ENCODE measurements at regions of chr3 and their contacts with region 1.

Region 1: GRCh38 chr3:16884084-16884747 is 539 bp upstream of the PLCL2 start:
- DNase-seq: peak; percentile 69 to 92
- ATAC-seq: peak; percentile 80 to 94
- H3K4me3 ChIP-seq: peak overlapping the region; percentile 85
- H3K27ac ChIP-seq: peak overlapping the region; percentile 77 to 88
- H3K4me1 ChIP-seq: peaks cover 8% of the 10 kb centered on the region; the same call in 2 of the 3 replicates
- CTCF ChIP-seq: peak; percentile 74
- EP300 ChIP-seq: no peak
- POLR2A ChIP-seq: no peak
- RAD21 ChIP-seq: peak; percentile 54 to 69

Region 2: GRCh38 chr3:16816048-16816780 is 68.0 kb before region 1 on chr3:
- CTCF ChIA-PET with region 1: no interaction called
- POLR2A ChIA-PET with region 1: no interaction called
- DNase-seq: no peak
- ATAC-seq: no peak
- H3K4me3 ChIP-seq: no peak overlapping the region
- H3K27ac ChIP-seq: no peak overlapping the region
- H3K4me1 ChIP-seq: no peaks in the 10 kb centered on the region
- CTCF ChIP-seq: no peak
- EP300 ChIP-seq: no peak
- POLR2A ChIP-seq: no peak
- RAD21 ChIP-seq: no peak

Region 3: DNA sequence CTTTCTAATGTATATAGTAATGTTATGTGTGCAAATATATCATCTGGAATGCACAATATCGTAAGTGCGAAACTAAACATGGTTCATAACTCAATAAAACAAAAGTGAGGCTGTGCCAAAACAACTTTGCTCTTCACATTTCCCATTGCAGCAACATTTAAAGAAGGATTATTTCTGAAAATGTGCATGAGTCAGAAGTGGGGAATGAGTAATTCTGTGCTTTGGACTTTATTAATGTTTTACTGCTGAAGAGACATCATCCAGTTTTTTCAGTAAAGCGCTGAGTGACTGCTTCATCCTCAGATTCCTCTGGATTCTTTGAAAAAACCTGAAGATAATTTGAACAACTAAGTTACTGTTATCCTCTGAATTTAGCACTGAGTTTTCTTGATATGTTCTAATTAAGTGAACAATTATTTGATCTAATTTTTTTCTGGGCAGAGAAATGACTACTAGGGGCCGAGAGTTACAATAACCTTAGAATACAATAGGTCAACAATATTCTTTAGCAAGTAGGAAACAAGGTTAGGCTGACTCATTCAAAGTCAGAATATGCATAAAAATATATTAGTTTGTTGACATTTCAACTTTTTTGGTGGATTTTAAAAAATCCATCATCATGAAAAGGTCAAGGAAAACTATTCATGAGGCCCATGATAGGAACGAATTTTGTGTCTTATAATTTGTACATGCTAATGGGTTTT is 19.5 kb before region 1 on chr3:
- CTCF ChIA-PET with region 1: interaction called, 15 read pairs
- POLR2A ChIA-PET with region 1: no interaction called
- DNase-seq: peak; percentile 36 to 39
- ATAC-seq: peak; percentile 84 to 91
- H3K4me3 ChIP-seq: no peak overlapping the region
- H3K27ac ChIP-seq: peak overlapping the region; percentile 19 to 52; a peak in 3 of 6 replicates
- H3K4me1 ChIP-seq: peaks cover 30% of the 10 kb centered on the region
- CTCF ChIP-seq: no peak
- EP300 ChIP-seq: no peak
- POLR2A ChIP-seq: no peak
- RAD21 ChIP-seq: no peak

Region 4: DNA sequence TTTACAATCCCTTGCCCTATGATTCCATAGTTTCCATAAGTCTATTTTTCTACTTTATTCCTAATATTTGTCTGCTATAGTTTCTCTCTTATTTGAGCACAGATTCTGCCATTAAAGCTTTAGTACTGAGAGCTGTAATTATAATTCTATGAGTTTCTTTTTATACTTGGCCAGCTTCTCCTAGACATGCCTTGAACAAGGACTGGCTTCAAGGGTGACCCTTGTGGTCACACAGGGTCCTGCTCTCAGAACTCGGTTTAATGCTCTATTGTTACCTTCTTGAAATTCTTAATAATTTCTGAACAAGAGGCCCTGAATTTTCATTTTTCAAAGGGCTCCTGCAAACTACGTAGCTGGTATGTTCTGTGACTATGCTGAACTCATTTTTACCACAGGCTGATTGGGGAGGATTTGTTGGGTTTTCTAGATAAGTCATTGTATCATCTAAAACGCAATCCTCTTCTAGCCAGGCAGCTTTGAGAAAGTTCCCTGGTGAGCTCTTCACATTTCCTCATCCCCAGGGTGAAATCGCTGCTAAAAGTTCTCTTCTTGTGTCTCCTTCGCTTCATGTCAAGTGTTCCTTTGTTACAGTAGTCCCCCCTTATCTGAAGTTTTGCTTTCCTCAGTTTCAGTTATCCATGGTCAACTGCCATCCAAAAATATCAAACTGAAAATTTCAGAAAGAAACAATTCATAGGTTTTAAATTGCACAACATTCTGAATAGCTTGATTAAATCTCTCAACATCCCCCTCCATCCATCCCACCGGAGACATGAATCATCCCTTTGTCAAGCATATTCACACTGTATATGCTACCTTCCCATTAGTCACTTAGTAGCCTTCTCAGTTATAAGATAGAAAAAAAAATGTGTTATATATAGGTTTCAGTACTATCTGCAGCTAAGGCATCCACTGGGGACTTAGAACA is 12.0 kb before region 1 on chr3:
- CTCF ChIA-PET with region 1: interaction called, 21 read pairs
- POLR2A ChIA-PET with region 1: no interaction called
- DNase-seq: no peak
- ATAC-seq: peak in 1 of 2 experiments; percentile 51; a peak in 1 of 6 replicates
- H3K4me3 ChIP-seq: no peak overlapping the region
- H3K27ac ChIP-seq: no peak overlapping the region
- H3K4me1 ChIP-seq: no peaks in the 10 kb centered on the region
- CTCF ChIP-seq: no peak
- EP300 ChIP-seq: no peak
- POLR2A ChIP-seq: no peak
- RAD21 ChIP-seq: no peak

Region 5: DNA sequence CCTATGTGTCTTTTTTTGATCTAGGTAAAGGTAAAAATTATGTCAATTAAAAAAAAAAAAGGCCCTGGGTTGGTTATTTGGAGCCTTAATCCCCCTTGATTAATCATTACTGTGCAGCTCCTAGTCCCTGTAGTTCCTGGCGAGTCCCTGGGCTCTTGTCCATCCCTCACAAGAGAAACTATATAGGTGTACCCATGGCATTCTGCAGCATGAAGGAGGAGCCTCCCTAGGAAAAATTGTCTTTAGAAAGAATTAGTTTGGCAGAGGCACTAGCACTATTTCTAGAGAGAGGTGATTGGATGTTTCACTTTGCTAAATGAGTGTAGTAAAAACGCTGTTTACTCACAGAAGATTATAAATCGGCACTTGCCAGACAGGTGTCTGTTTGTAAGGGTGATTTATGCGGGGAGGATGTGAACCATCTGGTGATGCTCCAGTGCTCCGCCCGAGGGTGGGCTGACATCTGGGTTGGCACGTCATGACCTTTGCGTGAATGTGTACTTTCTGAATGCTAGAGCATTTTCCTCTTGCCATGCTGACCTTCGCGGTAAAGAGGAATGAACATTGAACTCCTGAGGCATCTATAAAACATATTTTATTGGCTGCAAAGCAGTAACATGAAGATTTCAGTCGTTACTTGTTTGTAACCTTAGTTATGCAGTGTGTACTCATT is 13.2 kb after region 1 on chr3:
- CTCF ChIA-PET with region 1: interaction called, 14 read pairs
- POLR2A ChIA-PET with region 1: no interaction called
- DNase-seq: peak in 1 of 2 experiments; percentile 17
- ATAC-seq: no peak
- H3K4me3 ChIP-seq: no peak overlapping the region
- H3K27ac ChIP-seq: no peak overlapping the region
- H3K4me1 ChIP-seq: no peaks in the 10 kb centered on the region
- CTCF ChIP-seq: no peak
- EP300 ChIP-seq: no peak
- POLR2A ChIP-seq: no peak
- RAD21 ChIP-seq: no peak

Region 6: GRCh38 chr3:17442332-17443049 is 558.3 kb after region 1 on chr3:
- CTCF ChIA-PET with region 1: no interaction called
- POLR2A ChIA-PET with region 1: no interaction called
- DNase-seq: no peak
- ATAC-seq: no peak
- H3K4me3 ChIP-seq: no peak overlapping the region
- H3K27ac ChIP-seq: no peak overlapping the region
- H3K4me1 ChIP-seq: no peaks in the 10 kb centered on the region
- CTCF ChIP-seq: no peak
- EP300 ChIP-seq: no peak
- POLR2A ChIP-seq: no peak
- RAD21 ChIP-seq: no peak